Gastrocnemius medialis (tissue), 4 donors: ENCODE measurements at regions of chr5 and their contacts with region 1.

Region 1: DNA sequence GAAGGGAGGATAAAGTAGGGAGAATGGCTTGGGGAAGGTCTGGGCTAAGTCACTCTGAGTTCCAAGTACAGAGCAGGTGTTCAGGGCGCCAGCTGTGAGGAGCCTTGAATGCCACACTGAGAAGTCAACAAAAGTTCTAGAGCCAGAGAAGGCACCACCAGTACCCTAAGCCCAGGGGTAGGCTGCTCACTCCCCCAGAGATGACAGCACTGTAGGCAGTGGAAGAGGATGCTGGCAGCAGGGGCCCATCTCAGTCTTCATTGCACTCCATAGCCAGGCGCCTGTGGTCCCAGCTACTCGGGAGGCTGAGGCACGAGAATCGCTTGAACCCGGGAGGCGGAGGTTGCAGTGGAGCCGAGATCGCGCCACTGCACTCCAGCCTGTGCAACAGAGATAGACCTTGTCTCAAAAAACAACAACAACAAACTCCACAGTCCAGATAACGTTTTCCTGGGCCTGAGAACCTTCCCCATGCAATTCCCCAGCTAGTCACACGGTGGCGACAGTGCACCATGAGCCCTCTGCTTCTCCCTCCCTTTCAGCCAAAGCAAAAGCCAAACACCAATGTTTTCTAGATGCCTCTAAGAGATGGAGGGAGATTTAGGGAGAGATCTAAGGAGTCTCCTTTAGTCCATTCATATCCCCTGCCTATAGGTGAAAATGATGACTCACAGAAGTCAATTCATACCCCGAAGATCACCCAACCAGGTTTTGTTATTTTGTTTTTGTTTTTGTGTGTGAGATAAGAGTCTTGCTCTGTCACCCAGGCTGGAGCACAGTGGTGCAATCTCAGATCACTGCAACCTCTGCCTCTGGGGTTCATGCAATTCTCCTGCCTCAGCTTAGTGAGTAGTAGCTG is 19.8 kb upstream of the NSD1 start:
- DNase-seq: peak; percentile 47 to 68
- ATAC-seq: peak; percentile 69 to 70
- H3K4me3 ChIP-seq: peak overlapping the region in 1 of 4 donors; percentile 22
- H3K27ac ChIP-seq: peak overlapping the region in 2 of 4 donors; percentile 16 to 51
- H3K4me1 ChIP-seq: peaks cover 7 to 10% of the 10 kb centered on the region in 2 donors
- H3K27me3 ChIP-seq: no peaks in the 10 kb centered on the region
- CTCF ChIP-seq: peak; percentile 88 to 99 (median 96)
- POLR2A ChIP-seq: no peak

Region 2: DNA sequence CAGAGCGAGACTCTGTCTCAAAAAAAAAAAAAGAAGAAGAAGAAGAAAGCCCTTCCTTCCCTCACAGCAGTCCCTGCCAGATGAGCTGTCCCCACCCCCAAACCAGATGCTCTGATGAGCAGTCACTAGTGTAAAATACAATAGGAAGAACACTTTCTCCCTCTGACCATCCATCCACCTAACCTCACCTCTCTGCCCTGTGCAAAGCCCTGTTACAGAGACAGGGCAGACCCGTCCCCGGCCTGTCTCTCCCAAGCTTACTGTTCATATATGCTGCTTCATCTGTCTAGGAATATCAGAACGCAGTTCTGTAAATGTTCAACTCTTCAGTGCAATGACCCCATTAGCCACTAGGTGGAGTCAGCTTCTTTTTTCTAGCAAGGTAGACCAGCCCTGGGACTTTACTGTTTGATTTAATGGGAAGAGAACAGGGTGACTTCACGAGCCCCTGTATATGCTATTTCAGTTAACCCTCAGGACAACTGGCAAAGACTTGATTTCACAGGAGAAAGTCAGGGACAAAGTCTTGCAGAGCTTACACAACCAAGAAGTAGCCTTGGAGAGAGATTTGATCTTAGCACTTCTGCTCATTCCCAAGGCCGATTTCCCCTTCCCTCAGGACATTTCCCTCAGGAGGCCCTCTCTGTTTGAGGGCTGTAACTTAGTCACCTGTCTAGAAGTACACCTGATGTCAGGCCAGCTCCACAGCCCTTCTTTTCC is 42.0 kb before region 1 on chr5:
- in situ Hi-C with region 1: no loop called
- intact Hi-C with region 1: loop called (anchors 1 kb)
- DNase-seq: peak; percentile 37 to 41
- ATAC-seq: peak; percentile 78 to 91
- H3K4me3 ChIP-seq: no peak overlapping the region
- H3K27ac ChIP-seq: no peak overlapping the region
- H3K4me1 ChIP-seq: no peaks in the 10 kb centered on the region
- H3K27me3 ChIP-seq: no peaks in the 10 kb centered on the region
- CTCF ChIP-seq: peak; percentile 71 to 87 (median 77)
- POLR2A ChIP-seq: no peak

Region 3: GRCh38 chr5:177232761-177233160 is 119.0 kb after region 1 on chr5:
- in situ Hi-C with region 1: no loop called
- intact Hi-C with region 1: no loop called
- DNase-seq: no peak
- ATAC-seq: peak in 1 of 2 donors; percentile 21
- H3K4me3 ChIP-seq: no peak overlapping the region
- H3K27ac ChIP-seq: peak overlapping the region in 2 of 4 donors; percentile 15 to 51
- H3K4me1 ChIP-seq: peaks cover 38 to 46% of the 10 kb centered on the region in 2 donors
- H3K27me3 ChIP-seq: no peaks in the 10 kb centered on the region
- CTCF ChIP-seq: no peak
- POLR2A ChIP-seq: no peak

Region 4: DNA sequence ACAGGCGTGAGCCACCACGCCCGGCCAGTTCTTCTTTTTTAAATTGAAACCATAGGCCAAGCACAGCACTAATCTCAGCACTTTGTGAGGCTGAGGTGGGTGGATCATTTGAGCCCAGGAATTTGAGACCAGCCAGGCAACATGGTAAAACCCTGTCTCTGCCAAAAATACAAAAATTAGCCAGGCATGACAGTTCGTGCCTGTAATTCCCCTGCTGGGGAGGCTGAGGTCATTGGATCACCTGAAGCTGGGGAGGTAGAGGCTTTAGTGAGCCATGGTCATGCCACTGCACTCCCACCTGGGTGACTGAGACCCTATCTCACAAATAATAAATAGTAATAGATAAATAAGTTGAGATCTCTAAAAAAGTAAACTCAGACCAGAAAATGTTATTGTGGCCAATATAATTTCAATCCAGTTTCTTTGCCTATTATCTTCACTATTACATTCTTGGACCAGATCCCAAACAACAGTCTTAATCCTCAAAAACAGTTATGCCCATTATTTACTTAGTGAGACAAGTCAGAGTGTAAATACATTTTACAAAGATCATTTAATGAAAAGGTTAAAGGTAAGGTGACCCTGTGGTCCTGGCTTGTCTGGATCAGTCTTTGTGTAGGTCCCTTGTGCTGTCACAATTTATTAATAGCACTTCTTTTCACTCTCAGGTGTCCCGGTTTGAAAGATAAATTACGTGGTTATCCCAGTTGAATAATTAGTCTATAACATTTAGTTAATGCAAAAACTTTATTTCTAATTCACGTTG is 136.1 kb after region 1 on chr5:
- in situ Hi-C with region 1: loop called in 1 of 4 experiments (anchors 25 kb)
- intact Hi-C with region 1: loop called (anchors 5 kb)
- DNase-seq: no peak
- ATAC-seq: peak; percentile 73 to 86
- H3K4me3 ChIP-seq: no peak overlapping the region
- H3K27ac ChIP-seq: peak overlapping the region; percentile 19 to 68 (median 58)
- H3K4me1 ChIP-seq: no peaks in the 10 kb centered on the region
- H3K27me3 ChIP-seq: no peaks in the 10 kb centered on the region
- CTCF ChIP-seq: no peak
- POLR2A ChIP-seq: no peak

Region 5: DNA sequence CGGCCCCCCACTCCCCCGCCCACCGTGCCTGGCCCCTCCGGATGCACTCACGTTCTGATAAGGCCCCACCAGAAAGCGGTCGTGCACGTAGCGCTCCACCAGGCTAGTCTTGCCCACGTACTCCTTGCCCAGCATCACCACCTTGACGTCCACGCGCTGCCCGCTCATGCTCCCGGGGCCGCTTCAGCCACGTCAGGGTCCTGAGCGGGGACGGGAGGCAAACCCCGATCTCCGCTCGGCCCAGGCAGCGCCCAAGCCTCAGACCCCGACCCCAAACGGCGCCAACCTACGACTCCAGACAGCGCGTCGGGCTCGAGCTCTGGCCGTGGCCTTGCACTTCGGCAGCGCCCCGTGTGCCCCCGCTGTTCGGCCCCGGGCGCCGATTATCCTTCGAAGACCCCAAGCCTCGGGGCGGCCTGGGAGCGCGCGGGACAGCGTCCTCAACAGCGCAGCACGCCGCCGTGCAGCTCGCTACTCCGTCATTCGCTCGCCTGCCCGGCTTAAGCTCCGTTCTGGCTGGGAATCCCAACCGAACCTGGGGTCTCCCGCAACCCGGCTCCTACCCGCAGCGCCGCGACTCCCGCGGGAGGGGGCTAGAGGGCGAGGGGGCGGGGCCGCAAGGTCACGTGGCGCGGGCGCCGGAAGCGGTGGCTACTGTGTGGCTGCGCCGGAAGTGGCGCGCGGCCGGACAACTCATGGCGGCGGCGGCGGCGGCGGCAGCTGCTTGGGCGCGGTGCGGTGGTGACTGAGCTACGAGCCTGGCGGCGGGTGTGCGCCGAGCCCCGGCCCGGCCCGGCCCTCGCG is 189.5 kb after region 1 on chr5 and contains the starts of genes PRELID1 and RAB24:
- in situ Hi-C with region 1: no loop called
- intact Hi-C with region 1: loop called (anchors 2 kb)
- DNase-seq: peak; percentile 75 to 84
- ATAC-seq: peak; percentile 80 to 84
- H3K4me3 ChIP-seq: peak within 1 kb of the TSS; percentile 84 to 99 (median 96)
- H3K27ac ChIP-seq: peak within 1 kb of the TSS; percentile 83 to 95 (median 92)
- H3K4me1 ChIP-seq: peaks cover 37 to 42% of the 10 kb centered on the region in 2 donors
- H3K27me3 ChIP-seq: no peaks in the 10 kb centered on the region
- CTCF ChIP-seq: peak in 2 of 5 experiments; percentile 11 to 35
- POLR2A ChIP-seq: peak; percentile 81 to 89
- total RNA-seq, gene PRELID1: 13.4 to 45.8 (median 28.2) TPM
- total RNA-seq, gene RAB24: 11.4 to 22.8 (median 14.5) TPM